Naive thymus-derived CD4-positive, alpha-beta T cell (primary cell): ENCODE measurements at regions of chr7 and their contacts with region 1.

Region 1: GRCh38 chr7:37833107-37833817 is 15.1 kb upstream of the NME8 start:
- DNase-seq: peak in 8 of 9 donors; percentile 15 to 57 (median 38)
- ATAC-seq: peak; percentile 76
- H3K4me3 ChIP-seq: peak overlapping the region; percentile 61
- H3K4me3 Mint-ChIP-seq: peak overlapping the region; percentile 74 to 95 (median 90)
- H3K27ac ChIP-seq: no peak overlapping the region
- H3K27ac Mint-ChIP-seq: peak overlapping the region in 8 of 9 donors; percentile 7 to 76 (median 53)
- H3K4me1 ChIP-seq: peaks cover 0 to 5% of the 10 kb centered on the region in 2 donors
- H3K4me1 Mint-ChIP-seq: peaks cover 0 to 13% (median 10%) of the 10 kb centered on the region in 7 donors
- H3K27me3 ChIP-seq: no peaks in the 10 kb centered on the region
- H3K27me3 Mint-ChIP-seq: peaks cover 0 to 17% (median 0%) of the 10 kb centered on the region in 5 donors

Region 2: DNA sequence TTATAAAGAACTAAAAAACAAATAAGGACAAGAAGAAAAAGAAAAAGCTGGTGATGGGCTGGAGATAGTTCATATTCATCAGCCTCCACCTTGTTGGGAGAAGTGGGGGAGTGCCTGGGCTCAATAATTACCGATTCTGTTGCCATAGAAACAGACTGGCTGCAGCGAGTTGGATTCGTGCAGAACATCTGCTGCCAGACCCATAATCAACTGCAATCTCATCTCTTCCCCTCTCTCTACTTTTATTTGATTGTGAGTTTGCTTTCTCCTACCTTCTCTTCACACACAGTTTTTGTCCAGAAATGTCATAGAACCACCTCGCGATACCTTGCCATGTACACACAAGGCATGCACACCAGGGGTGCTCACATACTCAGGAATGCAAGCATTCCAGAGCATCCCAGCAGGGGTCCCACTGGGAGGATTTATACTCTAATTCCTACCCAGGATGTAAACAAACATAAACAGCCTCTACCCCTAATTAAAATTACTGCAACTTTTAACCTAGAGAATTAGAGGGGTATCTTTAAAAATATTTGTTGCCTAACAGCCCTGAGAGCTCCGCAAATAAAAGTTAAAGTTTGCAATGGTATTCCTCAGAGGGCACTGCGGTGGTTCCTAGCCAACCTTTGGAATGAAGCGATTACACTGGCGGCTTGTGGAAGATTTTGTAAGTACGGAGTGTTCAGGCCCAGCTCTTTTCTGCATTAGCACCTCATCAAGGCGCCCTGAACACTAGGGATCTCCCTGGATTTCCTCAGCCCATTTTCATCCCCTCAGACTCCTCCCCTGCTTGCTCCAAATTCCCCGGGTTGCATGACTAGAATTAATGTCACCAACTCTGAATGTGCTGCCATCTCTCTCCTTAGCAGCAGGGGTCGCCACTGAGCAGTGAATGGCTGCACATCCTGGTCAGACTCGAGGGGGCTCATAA is 846.6 kb before region 1 on chr7:
- CTCF ChIA-PET with region 1: no interaction called
- POLR2A ChIA-PET with region 1: no interaction called
- intact Hi-C with region 1: loop called in 1 of 2 experiments (anchors 5 kb)
- DNase-seq: peak in 8 of 9 donors; percentile 10 to 64 (median 44)
- ATAC-seq: peak; percentile 80
- H3K4me3 ChIP-seq: no peak overlapping the region
- H3K4me3 Mint-ChIP-seq: peak overlapping the region in 2 of 10 donors; percentile 29 to 51
- H3K27ac ChIP-seq: no peak overlapping the region
- H3K27ac Mint-ChIP-seq: peak overlapping the region in 3 of 9 donors; percentile 10 to 51 (median 19)
- H3K4me1 ChIP-seq: no peaks in the 10 kb centered on the region
- H3K4me1 Mint-ChIP-seq: peaks cover 24 to 69% (median 47%) of the 10 kb centered on the region in 7 donors
- H3K27me3 ChIP-seq: no peaks in the 10 kb centered on the region
- H3K27me3 Mint-ChIP-seq: no peaks in the 10 kb centered on the region

Region 3: DNA sequence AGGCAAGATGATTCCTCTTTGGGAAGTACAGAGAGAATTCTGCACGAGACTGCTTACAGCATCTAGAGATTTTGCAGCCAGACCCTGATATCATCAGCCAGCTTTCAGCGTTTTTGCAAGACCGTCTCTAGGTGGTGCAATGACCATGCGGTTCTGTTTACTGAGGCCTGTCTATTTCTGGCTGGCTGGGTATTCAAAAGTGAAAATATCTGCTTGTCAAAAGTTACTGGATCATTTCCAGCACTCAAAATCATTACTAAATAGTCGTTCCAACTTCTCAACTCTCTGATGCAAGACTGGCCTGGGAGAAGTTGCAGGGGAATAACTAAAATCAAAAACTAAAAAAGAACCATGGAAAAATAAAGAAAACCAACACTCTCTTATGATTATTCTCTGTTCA is 624.7 kb before region 1 on chr7:
- CTCF ChIA-PET with region 1: no interaction called
- POLR2A ChIA-PET with region 1: no interaction called
- intact Hi-C with region 1: loop called in 1 of 2 experiments (anchors 1 kb)
- DNase-seq: peak in 7 of 9 donors; percentile 17 to 56 (median 33)
- ATAC-seq: peak; percentile 77
- H3K4me3 ChIP-seq: no peak overlapping the region
- H3K4me3 Mint-ChIP-seq: no peak overlapping the region
- H3K27ac ChIP-seq: no peak overlapping the region
- H3K27ac Mint-ChIP-seq: peak overlapping the region; percentile 25 to 89 (median 71)
- H3K4me1 ChIP-seq: no peaks in the 10 kb centered on the region
- H3K4me1 Mint-ChIP-seq: peaks cover 0 to 17% (median 8%) of the 10 kb centered on the region in 7 donors
- H3K27me3 ChIP-seq: no peaks in the 10 kb centered on the region
- H3K27me3 Mint-ChIP-seq: no peaks in the 10 kb centered on the region

Region 4: DNA sequence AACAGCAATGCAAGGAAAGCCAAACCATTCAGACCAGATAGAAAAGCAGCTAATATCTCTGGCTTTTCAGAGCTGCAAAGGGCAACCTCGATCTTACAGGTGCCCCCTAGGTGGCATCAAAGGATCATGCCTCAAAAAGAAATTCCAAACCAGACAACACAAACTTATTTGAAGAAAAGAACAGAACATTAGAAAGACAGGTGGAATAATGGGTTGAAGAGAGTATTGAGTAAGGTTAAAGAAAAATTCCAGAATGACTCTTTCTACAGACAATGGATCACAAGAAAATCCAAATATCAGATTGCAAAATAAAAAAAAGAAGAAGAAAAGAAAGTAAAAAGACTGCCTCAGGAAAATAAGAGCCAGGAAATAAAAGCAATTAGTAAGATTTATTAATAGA is 598.3 kb before region 1 on chr7:
- CTCF ChIA-PET with region 1: interaction called, 4 read pairs
- POLR2A ChIA-PET with region 1: no interaction called
- intact Hi-C with region 1: loop called (anchors 1 to 10 kb)
- DNase-seq: peak in 6 of 9 donors; percentile 13 to 45 (median 33)
- ATAC-seq: peak; percentile 32
- H3K4me3 ChIP-seq: no peak overlapping the region
- H3K4me3 Mint-ChIP-seq: no peak overlapping the region
- H3K27ac ChIP-seq: no peak overlapping the region
- H3K27ac Mint-ChIP-seq: peak overlapping the region in 2 of 9 donors; percentile 1 to 10
- H3K4me1 ChIP-seq: no peaks in the 10 kb centered on the region
- H3K4me1 Mint-ChIP-seq: peaks cover 12 to 33% (median 24%) of the 10 kb centered on the region in 7 donors
- H3K27me3 ChIP-seq: no peaks in the 10 kb centered on the region
- H3K27me3 Mint-ChIP-seq: no peaks in the 10 kb centered on the region

Region 5: GRCh38 chr7:37495574-37496184 is 337.6 kb before region 1 on chr7:
- CTCF ChIA-PET with region 1: no interaction called
- POLR2A ChIA-PET with region 1: no interaction called
- intact Hi-C with region 1: loop called in 1 of 2 experiments (anchors 5 kb)
- DNase-seq: peak in 6 of 9 donors; percentile 16 to 46 (median 36)
- ATAC-seq: peak; percentile 60
- H3K4me3 ChIP-seq: no peak overlapping the region
- H3K4me3 Mint-ChIP-seq: no peak overlapping the region
- H3K27ac ChIP-seq: no peak overlapping the region
- H3K27ac Mint-ChIP-seq: no peak overlapping the region
- H3K4me1 ChIP-seq: no peaks in the 10 kb centered on the region
- H3K4me1 Mint-ChIP-seq: peaks cover 0 to 6% (median 0%) of the 10 kb centered on the region in 7 donors
- H3K27me3 ChIP-seq: no peaks in the 10 kb centered on the region
- H3K27me3 Mint-ChIP-seq: no peaks in the 10 kb centered on the region

Region 6: GRCh38 chr7:37510043-37510634 is 323.1 kb before region 1 on chr7:
- CTCF ChIA-PET with region 1: no interaction called
- POLR2A ChIA-PET with region 1: no interaction called
- intact Hi-C with region 1: loop called (anchors 2 to 5 kb)
- DNase-seq: peak in 6 of 9 donors; percentile 10 to 41 (median 34)
- ATAC-seq: peak; percentile 69
- H3K4me3 ChIP-seq: no peak overlapping the region
- H3K4me3 Mint-ChIP-seq: no peak overlapping the region
- H3K27ac ChIP-seq: no peak overlapping the region
- H3K27ac Mint-ChIP-seq: no peak overlapping the region
- H3K4me1 ChIP-seq: no peaks in the 10 kb centered on the region
- H3K4me1 Mint-ChIP-seq: no peaks in the 10 kb centered on the region
- H3K27me3 ChIP-seq: no peaks in the 10 kb centered on the region
- H3K27me3 Mint-ChIP-seq: peaks cover 0 to 49% (median 16%) of the 10 kb centered on the region in 5 donors

Region 7: DNA sequence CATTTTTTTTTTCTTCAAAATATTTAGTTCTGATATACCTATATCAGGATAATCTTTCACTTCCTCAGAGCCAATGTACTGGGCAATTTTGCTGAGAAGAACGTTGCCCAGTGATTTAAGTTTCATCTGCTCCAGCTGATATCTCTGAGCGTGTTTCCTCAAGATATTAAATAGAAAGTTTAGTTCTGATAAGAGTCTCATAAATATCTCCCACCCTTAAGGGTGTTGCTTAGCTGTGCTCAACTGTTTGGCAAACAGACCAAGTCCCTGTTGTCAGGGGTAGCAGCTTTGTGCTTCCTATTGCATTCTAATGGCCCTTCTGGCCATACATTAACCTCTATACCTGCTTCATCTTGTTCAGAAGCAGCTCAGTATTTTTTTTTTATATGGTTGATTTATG is 234.4 kb before region 1 on chr7:
- CTCF ChIA-PET with region 1: no interaction called
- POLR2A ChIA-PET with region 1: no interaction called
- intact Hi-C with region 1: no loop called
- DNase-seq: no peak
- ATAC-seq: peak; percentile 27
- H3K4me3 ChIP-seq: no peak overlapping the region
- H3K4me3 Mint-ChIP-seq: no peak overlapping the region
- H3K27ac ChIP-seq: no peak overlapping the region
- H3K27ac Mint-ChIP-seq: no peak overlapping the region
- H3K4me1 ChIP-seq: no peaks in the 10 kb centered on the region
- H3K4me1 Mint-ChIP-seq: no peaks in the 10 kb centered on the region
- H3K27me3 ChIP-seq: no peaks in the 10 kb centered on the region
- H3K27me3 Mint-ChIP-seq: peaks cover 5 to 24% (median 8%) of the 10 kb centered on the region in 5 donors

Region 8: DNA sequence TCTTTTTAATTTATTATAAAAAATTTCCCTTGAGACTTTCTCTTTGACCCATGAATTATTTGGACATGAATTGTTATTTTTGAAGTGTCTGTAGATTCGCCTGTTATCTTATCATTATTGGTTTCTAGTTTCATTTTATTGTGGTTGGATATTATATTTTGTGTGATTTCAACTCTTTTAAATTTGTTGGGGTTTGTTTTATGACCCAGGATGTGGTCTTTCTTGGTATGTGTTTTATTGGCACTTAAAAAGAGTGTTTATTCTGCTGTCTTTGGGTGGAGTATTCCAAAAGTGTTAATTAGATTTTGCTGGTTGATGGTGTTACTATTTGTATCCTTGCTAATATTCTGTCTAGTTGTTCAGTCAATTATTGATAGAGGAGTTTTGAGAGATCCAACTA is 200.2 kb before region 1 on chr7:
- CTCF ChIA-PET with region 1: no interaction called
- POLR2A ChIA-PET with region 1: no interaction called
- intact Hi-C with region 1: loop called in 1 of 2 experiments (anchors 5 kb)
- DNase-seq: no peak
- ATAC-seq: no peak
- H3K4me3 ChIP-seq: no peak overlapping the region
- H3K4me3 Mint-ChIP-seq: peak overlapping the region in 1 of 10 donors; percentile 69
- H3K27ac ChIP-seq: no peak overlapping the region
- H3K27ac Mint-ChIP-seq: no peak overlapping the region
- H3K4me1 ChIP-seq: no peaks in the 10 kb centered on the region
- H3K4me1 Mint-ChIP-seq: no peaks in the 10 kb centered on the region
- H3K27me3 ChIP-seq: no peaks in the 10 kb centered on the region
- H3K27me3 Mint-ChIP-seq: peaks cover 7 to 24% (median 21%) of the 10 kb centered on the region in 5 donors

Region 9: DNA sequence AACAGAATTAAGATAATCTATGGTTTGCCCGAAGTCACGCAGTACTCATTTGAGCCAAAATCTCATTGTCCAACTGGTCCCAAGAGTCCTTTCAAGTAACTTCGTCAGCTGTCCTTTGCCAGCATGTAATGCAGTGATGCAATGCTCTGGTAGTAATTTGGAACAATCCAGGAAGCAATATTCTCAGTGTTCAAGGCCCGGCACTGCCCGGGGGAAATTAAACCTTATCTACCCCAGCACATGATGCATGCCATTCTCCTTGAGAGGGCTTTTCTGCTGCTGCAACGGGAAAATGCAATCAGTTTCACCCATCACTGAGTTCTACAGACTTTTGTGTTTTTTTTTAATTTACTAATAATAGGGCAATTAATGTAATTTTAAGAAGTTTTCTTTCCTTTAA is 62.4 kb before region 1 on chr7:
- CTCF ChIA-PET with region 1: no interaction called
- POLR2A ChIA-PET with region 1: no interaction called
- intact Hi-C with region 1: no loop called
- DNase-seq: no peak
- ATAC-seq: no peak
- H3K4me3 ChIP-seq: no peak overlapping the region
- H3K4me3 Mint-ChIP-seq: no peak overlapping the region
- H3K27ac ChIP-seq: no peak overlapping the region
- H3K27ac Mint-ChIP-seq: no peak overlapping the region
- H3K4me1 ChIP-seq: no peaks in the 10 kb centered on the region
- H3K4me1 Mint-ChIP-seq: peaks cover 0 to 8% (median 0%) of the 10 kb centered on the region in 7 donors
- H3K27me3 ChIP-seq: no peaks in the 10 kb centered on the region
- H3K27me3 Mint-ChIP-seq: peaks cover 0 to 19% (median 7%) of the 10 kb centered on the region in 5 donors

Region 10: GRCh38 chr7:38107486-38107893 is 274.2 kb after region 1 on chr7:
- CTCF ChIA-PET with region 1: no interaction called
- POLR2A ChIA-PET with region 1: no interaction called
- intact Hi-C with region 1: no loop called
- DNase-seq: peak; percentile 16 to 58 (median 44)
- ATAC-seq: peak; percentile 88
- H3K4me3 ChIP-seq: no peak overlapping the region
- H3K4me3 Mint-ChIP-seq: no peak overlapping the region
- H3K27ac ChIP-seq: no peak overlapping the region
- H3K27ac Mint-ChIP-seq: no peak overlapping the region
- H3K4me1 ChIP-seq: no peaks in the 10 kb centered on the region
- H3K4me1 Mint-ChIP-seq: peaks cover 0 to 2% (median 0%) of the 10 kb centered on the region in 7 donors
- H3K27me3 ChIP-seq: no peaks in the 10 kb centered on the region
- H3K27me3 Mint-ChIP-seq: peaks cover 18 to 43% (median 23%) of the 10 kb centered on the region in 5 donors